Activated B cell treated with CpG ODN at 0.5 μM for 24 hours (primary cell): ENCODE measurements at regions of chr15 and their contacts with region 1.

Region 1: DNA sequence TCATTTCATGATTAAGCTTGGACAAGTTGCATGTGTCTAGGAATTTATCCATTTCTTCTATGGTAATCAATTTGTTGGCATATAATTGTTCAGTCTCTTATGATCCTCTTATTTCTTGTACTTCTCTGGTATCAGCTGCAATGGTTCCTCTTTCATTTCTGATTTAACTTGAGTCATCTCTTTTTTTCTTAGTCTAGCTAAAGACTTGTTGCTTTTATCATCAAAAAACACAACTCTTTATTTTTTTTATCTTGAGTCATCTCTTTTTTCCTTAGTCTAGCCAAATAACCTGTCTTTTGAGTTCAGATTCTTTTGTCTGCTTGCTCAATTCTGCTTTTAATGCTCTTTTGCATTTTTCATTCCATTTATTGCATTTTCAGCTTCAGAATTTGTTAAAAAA is 37.3 kb downstream of the UBE3A start:
- DNase-seq: no peak
- ATAC-seq: peak; percentile 28
- H3K4me3 Mint-ChIP-seq: no peak overlapping the region
- H3K27ac Mint-ChIP-seq: no peak overlapping the region
- H3K4me1 Mint-ChIP-seq: peaks cover 57% of the 10 kb centered on the region
- H3K27me3 Mint-ChIP-seq: no peaks in the 10 kb centered on the region
- CTCF ChIP-seq: no peak

Region 2: GRCh38 chr15:25372298-25372697 is 29.2 kb before region 1 on chr15:
- CTCF ChIA-PET with region 1: no interaction called
- POLR2A ChIA-PET with region 1: no interaction called
- intact Hi-C with region 1: loop called (anchors 5 kb)
- DNase-seq: no peak
- ATAC-seq: no peak
- H3K4me3 Mint-ChIP-seq: no peak overlapping the region
- H3K27ac Mint-ChIP-seq: no peak overlapping the region
- H3K4me1 Mint-ChIP-seq: peaks cover 2% of the 10 kb centered on the region
- H3K27me3 Mint-ChIP-seq: no peaks in the 10 kb centered on the region
- CTCF ChIP-seq: no peak

Region 3: GRCh38 chr15:25416693-25417092 is 15.2 kb after region 1 on chr15:
- CTCF ChIA-PET with region 1: no interaction called
- POLR2A ChIA-PET with region 1: no interaction called
- intact Hi-C with region 1: no loop called
- DNase-seq: no peak
- ATAC-seq: no peak
- H3K4me3 Mint-ChIP-seq: no peak overlapping the region
- H3K27ac Mint-ChIP-seq: no peak overlapping the region
- H3K4me1 Mint-ChIP-seq: peaks cover 77% of the 10 kb centered on the region
- H3K27me3 Mint-ChIP-seq: no peaks in the 10 kb centered on the region
- CTCF ChIP-seq: no peak